Activated CD4-positive, alpha-beta T cell treated with anti-CD3 and anti-CD28 coated beads, Interleukin-2, amount 10 ng/mL, durations not matched to agents 7 days and 5 days (primary cell): ENCODE measurements at regions of chr1 and their contacts with region 1.

Region 1: GRCh38 chr1:109532365-109533136 is 7.1 kb upstream of the GPR61 start:
- DNase-seq: peak; percentile 94
- H3K4me3 Mint-ChIP-seq: peak overlapping the region; percentile 40
- H3K27ac Mint-ChIP-seq: peak overlapping the region; percentile 96
- H3K4me1 Mint-ChIP-seq: peaks cover 37% of the 10 kb centered on the region
- H3K27me3 Mint-ChIP-seq: no peaks in the 10 kb centered on the region

Region 2: GRCh38 chr1:109253484-109254141 is 278.9 kb before region 1 on chr1:
- CTCF ChIA-PET with region 1: interaction called, 14 read pairs
- POLR2A ChIA-PET with region 1: no interaction called
- DNase-seq: no peak
- H3K4me3 Mint-ChIP-seq: no peak overlapping the region
- H3K27ac Mint-ChIP-seq: no peak overlapping the region
- H3K4me1 Mint-ChIP-seq: peaks cover 6% of the 10 kb centered on the region
- H3K27me3 Mint-ChIP-seq: peaks cover 2% of the 10 kb centered on the region

Region 3: GRCh38 chr1:109277434-109278204 is 254.9 kb before region 1 on chr1:
- CTCF ChIA-PET with region 1: interaction called, 27 read pairs
- POLR2A ChIA-PET with region 1: no interaction called
- DNase-seq: peak; percentile 66
- H3K4me3 Mint-ChIP-seq: no peak overlapping the region
- H3K27ac Mint-ChIP-seq: no peak overlapping the region
- H3K4me1 Mint-ChIP-seq: peaks cover 38% of the 10 kb centered on the region
- H3K27me3 Mint-ChIP-seq: no peaks in the 10 kb centered on the region

Region 4: GRCh38 chr1:109312978-109313775 is 219.4 kb before region 1 on chr1:
- CTCF ChIA-PET with region 1: no interaction called
- POLR2A ChIA-PET with region 1: no interaction called
- DNase-seq: no peak
- H3K4me3 Mint-ChIP-seq: no peak overlapping the region
- H3K27ac Mint-ChIP-seq: no peak overlapping the region
- H3K4me1 Mint-ChIP-seq: no peaks in the 10 kb centered on the region
- H3K27me3 Mint-ChIP-seq: peaks cover 5% of the 10 kb centered on the region

Region 5: GRCh38 chr1:109426278-109427170 is 106.0 kb before region 1 on chr1 and contains the start of gene PSMA5:
- CTCF ChIA-PET with region 1: interaction called, 15 read pairs
- POLR2A ChIA-PET with region 1: no interaction called
- DNase-seq: peak; percentile 98
- H3K4me3 Mint-ChIP-seq: peak within 1 kb of the TSS; percentile 94
- H3K27ac Mint-ChIP-seq: peak within 1 kb of the TSS; percentile 97
- H3K4me1 Mint-ChIP-seq: peaks cover 39% of the 10 kb centered on the region
- H3K27me3 Mint-ChIP-seq: no peaks in the 10 kb centered on the region
- total RNA-seq, gene PSMA5: 157 to 174 TPM

Region 6: GRCh38 chr1:109548321-109549267 is 16.0 kb after region 1 on chr1 and contains the start of gene GNAI3:
- CTCF ChIA-PET with region 1: interaction called, 47 read pairs
- POLR2A ChIA-PET with region 1: no interaction called
- DNase-seq: peak; percentile 98
- H3K4me3 Mint-ChIP-seq: peak within 1 kb of the TSS; percentile 96
- H3K27ac Mint-ChIP-seq: peak within 1 kb of the TSS; percentile 98
- H3K4me1 Mint-ChIP-seq: peaks cover 49% of the 10 kb centered on the region
- H3K27me3 Mint-ChIP-seq: no peaks in the 10 kb centered on the region
- total RNA-seq, gene GNAI3: 8.8 to 9.7 TPM

Region 7: GRCh38 chr1:109640285-109640865 is 107.8 kb after region 1 on chr1:
- CTCF ChIA-PET with region 1: interaction called, 10 read pairs
- POLR2A ChIA-PET with region 1: no interaction called
- DNase-seq: peak; percentile 93
- H3K4me3 Mint-ChIP-seq: no peak overlapping the region
- H3K27ac Mint-ChIP-seq: no peak overlapping the region
- H3K4me1 Mint-ChIP-seq: peaks cover 21% of the 10 kb centered on the region
- H3K27me3 Mint-ChIP-seq: no peaks in the 10 kb centered on the region